MCF 10A (cell line): ENCODE measurements at regions of chr12 and their contacts with region 1.

Region 1: DNA sequence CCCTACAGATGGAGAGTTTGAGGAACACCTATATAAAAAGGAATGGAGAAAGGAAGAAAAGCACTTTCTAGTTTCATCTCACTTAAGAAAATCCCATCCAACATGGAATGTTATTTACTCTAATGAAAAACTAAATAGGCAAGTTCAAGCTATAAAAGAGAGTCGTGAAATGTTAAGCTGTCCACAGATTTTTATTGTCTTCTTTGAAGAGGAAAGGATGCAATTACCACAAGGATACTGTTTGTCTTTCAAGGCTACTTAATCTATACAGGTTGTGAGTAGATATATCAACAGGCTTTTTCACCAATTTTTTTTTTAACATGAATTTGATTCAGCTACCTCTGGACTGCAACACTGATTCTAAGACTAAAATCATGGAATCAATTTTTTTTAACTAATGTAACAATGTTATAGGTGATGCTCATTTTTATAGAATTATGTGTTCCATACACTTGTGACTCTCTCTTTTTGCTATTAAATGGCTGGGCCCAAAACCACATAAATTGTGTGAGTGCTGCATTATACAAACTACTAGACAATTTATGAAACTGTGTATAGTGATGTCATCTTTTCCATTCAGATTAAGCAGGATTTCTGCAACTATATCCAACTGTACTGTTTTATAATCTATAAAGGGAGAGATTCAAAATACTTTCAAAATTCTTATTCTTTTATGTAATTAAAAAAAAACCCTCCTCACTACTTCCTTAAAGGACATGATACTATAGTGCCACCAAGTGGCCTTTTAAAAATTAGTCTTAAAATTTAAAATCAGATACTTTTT is 26.8 kb upstream of the BMAL2 start:
- DNase-seq: peak; percentile 44
- H3K4me3 Mint-ChIP-seq: no peak overlapping the region
- H3K27ac Mint-ChIP-seq: no peak overlapping the region
- H3K4me1 Mint-ChIP-seq: peaks cover 10% of the 10 kb centered on the region
- H3K27me3 Mint-ChIP-seq: no peaks in the 10 kb centered on the region
- CTCF ChIP-seq: peak; percentile 50

Region 2: DNA sequence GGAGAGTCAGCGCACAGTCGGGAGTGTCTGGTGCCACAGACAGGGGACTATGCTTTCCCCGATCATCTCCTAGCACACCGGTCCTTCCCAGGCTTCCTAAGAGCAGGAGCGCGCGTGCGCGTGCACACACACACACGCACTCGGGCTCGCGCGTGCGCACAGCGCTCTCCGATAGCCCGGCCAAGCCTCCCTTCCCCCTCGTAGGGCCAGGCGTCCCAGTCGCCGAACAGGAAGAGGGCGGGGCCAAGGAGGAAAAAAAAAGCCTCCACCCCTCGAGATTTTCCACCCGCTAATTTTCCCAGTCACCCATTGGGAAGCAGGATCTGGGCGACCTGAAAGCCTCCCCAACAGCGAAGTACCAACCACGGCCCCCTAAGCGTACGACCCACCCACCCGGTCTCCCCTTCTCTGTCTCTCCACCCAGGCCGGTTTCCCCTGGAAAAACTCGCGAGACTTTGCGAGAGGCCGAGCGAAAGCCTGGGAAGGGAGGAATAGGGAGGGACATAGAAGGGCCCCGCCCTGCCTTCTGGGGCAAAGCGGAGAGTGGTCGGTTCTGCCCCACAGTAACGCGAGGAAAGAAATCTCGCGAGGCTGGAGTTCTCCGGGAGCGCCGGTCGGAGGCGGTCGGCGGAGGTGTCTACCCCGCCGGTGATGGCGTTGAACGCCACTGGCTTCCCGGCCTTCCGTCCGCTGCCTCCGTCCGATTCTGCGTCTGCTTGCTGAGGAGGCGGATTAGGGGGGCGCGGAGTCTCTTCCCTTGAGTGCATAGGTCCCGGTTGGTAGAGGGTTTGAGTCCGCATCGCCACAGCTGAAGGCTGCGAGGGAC is 367.8 kb before region 1 on chr12 and contains the starts of genes FGFR1OP2 and INTS13:
- CTCF ChIA-PET with region 1: interaction called, 3 read pairs
- POLR2A ChIA-PET with region 1: no interaction called
- intact Hi-C with region 1: loop called (anchors 5 kb)
- DNase-seq: peak; percentile 99
- H3K4me3 Mint-ChIP-seq: peak within 1 kb of the TSS; percentile 91
- H3K27ac Mint-ChIP-seq: peak within 1 kb of the TSS; percentile 97
- H3K4me1 Mint-ChIP-seq: peaks cover 45% of the 10 kb centered on the region
- H3K27me3 Mint-ChIP-seq: no peaks in the 10 kb centered on the region
- CTCF ChIP-seq: no peak
- total RNA-seq, gene FGFR1OP2: 40.6 and 44.6 TPM in 2 replicates
- total RNA-seq, gene INTS13: 64.8 and 67.8 TPM in 2 replicates

Region 3: DNA sequence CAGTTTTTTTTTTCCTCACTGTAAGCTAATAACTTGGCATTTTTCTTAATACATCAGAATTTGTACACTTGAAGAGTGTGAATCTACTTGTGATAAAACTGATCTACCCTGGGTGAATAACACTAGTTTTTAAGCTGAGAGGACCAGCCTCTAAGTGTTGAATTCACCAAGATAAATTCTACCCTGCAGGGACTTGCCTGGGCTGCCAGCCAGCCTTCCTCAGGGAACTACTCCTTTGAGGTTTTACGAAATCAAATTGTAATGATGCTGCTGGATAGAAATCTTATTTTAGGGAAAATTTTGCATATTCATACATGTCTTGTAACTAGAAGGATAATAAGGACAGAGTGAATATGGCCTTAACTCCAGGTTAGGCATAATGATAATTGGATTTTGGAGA is 281.6 kb before region 1 on chr12:
- CTCF ChIA-PET with region 1: interaction called, 5 read pairs
- POLR2A ChIA-PET with region 1: interaction called, 13 read pairs
- intact Hi-C with region 1: no loop called
- DNase-seq: no peak
- H3K4me3 Mint-ChIP-seq: no peak overlapping the region
- H3K27ac Mint-ChIP-seq: no peak overlapping the region
- H3K4me1 Mint-ChIP-seq: peaks cover 21% of the 10 kb centered on the region
- H3K27me3 Mint-ChIP-seq: no peaks in the 10 kb centered on the region
- CTCF ChIP-seq: no peak

Region 4: DNA sequence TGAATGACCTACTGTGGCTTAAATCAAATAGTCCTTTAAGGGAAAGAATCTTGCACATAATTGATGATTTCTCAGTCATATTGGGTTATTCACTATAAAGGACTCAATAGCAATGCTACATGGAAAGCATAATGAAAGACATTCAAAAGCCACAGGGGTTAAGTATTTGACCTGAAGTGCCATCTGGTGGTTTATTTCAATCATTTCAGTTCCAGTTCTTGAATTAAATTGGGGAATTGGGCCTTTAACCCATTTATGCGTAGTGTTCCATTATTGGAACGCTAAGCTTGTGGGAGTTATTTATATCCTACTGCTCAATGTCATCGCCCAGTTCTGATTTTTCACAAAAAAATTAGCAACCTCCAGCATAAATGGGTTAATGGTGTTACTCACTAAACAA is 182.2 kb before region 1 on chr12:
- CTCF ChIA-PET with region 1: interaction called, 28 read pairs
- POLR2A ChIA-PET with region 1: no interaction called
- intact Hi-C with region 1: loop called (anchors 5 kb)
- DNase-seq: peak; percentile 53
- H3K4me3 Mint-ChIP-seq: no peak overlapping the region
- H3K27ac Mint-ChIP-seq: no peak overlapping the region
- H3K4me1 Mint-ChIP-seq: no peaks in the 10 kb centered on the region
- H3K27me3 Mint-ChIP-seq: no peaks in the 10 kb centered on the region
- CTCF ChIP-seq: peak; percentile 34

Region 5: DNA sequence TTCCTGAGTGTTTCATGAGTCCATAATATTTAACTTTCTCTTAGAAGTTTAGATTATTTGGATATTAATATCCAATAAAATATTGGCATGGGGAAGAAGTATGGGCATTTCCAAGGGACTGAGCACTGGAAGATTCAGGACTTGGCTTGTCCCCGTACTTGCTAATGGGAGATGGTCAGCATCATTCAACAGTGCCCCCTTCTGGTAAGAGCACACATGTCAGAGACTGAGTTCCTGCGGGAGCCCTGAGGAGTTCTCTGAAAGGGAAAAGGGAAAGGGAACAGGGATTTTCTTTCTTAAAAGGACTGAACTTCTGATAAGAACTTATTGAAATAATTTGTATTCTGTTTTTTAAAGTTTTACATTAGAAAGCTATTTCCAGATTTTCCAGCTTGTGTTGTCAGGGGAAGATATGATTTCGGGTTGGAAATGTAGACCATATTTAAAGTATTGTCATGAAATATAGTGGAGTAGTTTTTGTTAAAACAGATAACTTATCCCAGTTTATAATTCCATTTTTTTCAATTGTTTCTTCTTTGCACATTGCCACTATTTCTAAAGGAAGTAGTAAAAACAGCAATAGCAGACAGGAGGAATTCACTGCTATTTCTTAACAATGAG is 163.7 kb before region 1 on chr12:
- CTCF ChIA-PET with region 1: interaction called, 7 read pairs
- POLR2A ChIA-PET with region 1: no interaction called
- intact Hi-C with region 1: loop called (anchors 2 kb)
- DNase-seq: peak; percentile 84
- H3K4me3 Mint-ChIP-seq: no peak overlapping the region
- H3K27ac Mint-ChIP-seq: peak overlapping the region; percentile 41
- H3K4me1 Mint-ChIP-seq: no peaks in the 10 kb centered on the region
- H3K27me3 Mint-ChIP-seq: no peaks in the 10 kb centered on the region
- CTCF ChIP-seq: peak; percentile 73

Region 6: GRCh38 chr12:27284751-27285150 is 21.1 kb before region 1 on chr12:
- CTCF ChIA-PET with region 1: interaction called, 12 read pairs
- POLR2A ChIA-PET with region 1: interaction called, 5 read pairs
- intact Hi-C with region 1: no loop called
- DNase-seq: peak; percentile 30
- H3K4me3 Mint-ChIP-seq: no peak overlapping the region
- H3K27ac Mint-ChIP-seq: no peak overlapping the region
- H3K4me1 Mint-ChIP-seq: peaks cover 12% of the 10 kb centered on the region
- H3K27me3 Mint-ChIP-seq: no peaks in the 10 kb centered on the region
- CTCF ChIP-seq: no peak

Region 7: DNA sequence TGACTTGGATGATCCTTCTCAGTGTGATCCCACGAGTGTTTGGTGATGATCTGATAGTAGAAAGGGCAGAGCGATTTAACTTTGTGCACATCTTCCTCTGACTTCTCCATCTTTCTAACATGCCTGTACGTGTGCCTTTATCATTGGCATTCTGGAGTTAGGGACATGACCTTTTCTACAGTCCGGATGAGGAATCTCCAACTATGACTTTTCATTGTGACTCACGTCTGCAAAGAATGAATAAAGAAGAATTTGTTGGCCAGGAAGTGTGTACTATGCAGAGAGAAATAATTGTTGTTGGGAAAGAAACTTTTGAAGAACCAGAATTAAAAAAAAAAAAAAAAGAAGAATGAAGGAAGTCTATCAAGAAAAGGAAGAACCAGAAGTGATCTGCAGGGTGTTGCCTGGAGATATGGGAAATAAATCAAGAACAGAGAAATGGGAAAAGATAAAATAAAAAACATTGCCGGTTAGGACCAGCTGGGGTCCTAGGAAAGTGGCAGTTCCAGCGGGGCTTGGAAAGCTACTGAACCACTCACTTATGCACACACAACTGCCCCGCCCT is 243.5 kb after region 1 on chr12:
- CTCF ChIA-PET with region 1: no interaction called
- POLR2A ChIA-PET with region 1: no interaction called
- intact Hi-C with region 1: no loop called
- DNase-seq: peak; percentile 88
- H3K4me3 Mint-ChIP-seq: peak overlapping the region; percentile 53
- H3K27ac Mint-ChIP-seq: peak overlapping the region; percentile 78
- H3K4me1 Mint-ChIP-seq: peaks cover 30% of the 10 kb centered on the region
- H3K27me3 Mint-ChIP-seq: no peaks in the 10 kb centered on the region
- CTCF ChIP-seq: no peak